Aorta (tissue), 5 donors: ENCODE measurements at regions of chr3 and their contacts with region 1.

Region 1: DNA sequence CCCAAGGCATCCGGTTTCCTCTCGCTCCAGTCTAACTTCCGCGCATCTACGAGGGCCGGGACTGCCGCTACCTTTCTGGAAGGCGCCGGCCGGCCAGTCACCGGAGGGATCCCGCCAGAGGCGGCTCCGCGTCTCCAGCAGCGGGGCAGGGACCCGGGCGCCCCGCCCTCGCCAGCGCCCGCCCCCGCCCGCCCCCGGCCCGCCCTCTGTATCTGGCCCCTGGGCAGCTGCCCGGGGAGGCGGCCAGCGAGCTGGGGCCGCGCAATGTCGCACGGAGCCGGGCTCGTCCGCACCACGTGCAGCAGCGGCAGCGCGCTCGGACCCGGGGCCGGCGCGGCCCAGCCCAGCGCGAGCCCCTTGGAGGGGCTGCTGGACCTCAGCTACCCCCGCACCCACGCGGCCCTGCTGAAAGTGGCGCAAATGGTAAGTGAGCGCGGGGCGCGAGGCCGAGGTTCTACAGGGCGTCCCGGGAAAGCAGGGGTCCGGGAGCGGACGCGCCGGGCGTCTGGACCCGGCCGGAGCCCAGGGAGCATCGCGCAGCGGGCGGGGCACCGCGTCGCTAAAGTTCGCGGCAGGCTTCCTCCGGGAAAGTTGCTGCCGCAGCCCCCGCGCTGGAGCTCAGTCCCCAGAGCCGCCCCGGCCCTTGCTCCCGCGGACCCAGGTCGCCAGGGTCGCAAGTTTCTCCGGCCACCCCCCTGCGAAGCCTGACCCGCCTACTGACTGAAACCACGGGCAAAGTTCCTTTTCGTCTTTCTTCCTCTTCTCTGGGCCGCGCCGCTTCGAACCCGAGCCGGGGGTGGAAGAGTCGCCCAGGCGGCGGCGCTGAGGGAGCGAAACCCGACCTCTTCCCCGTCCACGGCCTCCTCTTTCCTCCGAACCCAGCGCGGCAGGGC is at the start of gene CMTM7:
- DNase-seq: peak; percentile 85 to 90
- ATAC-seq: peak; percentile 85
- H3K4me3 ChIP-seq: peak within 1 kb of the TSS; percentile 30 to 49
- H3K27ac ChIP-seq: no peak within 1 kb of the TSS
- H3K4me1 ChIP-seq: no peaks in the 10 kb centered on the region
- H3K27me3 ChIP-seq: no peaks in the 10 kb centered on the region
- total RNA-seq, gene CMTM7: 11.8 to 17.3 TPM

Region 2: DNA sequence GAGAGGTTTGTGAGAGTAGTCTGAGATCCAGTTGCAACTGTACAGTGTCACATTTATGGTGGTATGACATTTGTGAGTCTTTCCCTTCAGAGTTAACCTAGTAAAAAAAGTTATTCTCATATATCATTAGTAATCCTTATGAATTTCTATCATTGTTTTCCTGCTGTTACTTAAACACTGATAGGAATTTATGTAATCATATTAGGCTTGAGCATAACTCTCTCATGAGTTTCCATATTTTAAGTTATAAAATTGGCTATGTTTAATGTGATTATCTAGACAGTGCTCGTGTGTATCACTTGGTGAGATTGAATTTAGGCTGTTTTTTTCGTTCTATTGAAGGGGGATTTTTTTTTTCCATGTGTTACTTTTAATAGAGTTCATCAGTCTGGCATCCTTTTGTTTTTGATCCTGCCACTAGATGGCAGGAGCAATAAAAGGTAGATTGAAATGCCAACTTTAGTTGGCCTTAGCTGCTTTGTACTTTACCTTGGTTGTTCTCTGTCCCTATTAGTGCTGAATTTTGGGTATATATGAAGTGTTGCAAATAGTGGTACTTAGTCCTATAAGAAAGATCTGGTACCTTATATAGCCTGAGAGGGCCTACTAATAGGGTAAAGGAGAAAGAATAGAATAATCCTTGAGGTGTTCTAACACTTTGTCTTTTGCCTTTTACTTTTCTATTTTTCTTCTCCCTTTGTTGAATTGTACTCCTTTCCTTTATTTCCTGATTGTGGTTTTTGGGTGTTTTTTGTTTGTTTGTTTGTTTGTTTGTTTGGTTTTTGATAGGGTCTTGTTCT is 841.2 kb before region 1 on chr3:
- intact Hi-C with region 1: no loop called
- DNase-seq: no peak
- ATAC-seq: no peak
- H3K4me3 ChIP-seq: no peak overlapping the region
- H3K27ac ChIP-seq: no peak overlapping the region
- H3K4me1 ChIP-seq: peaks cover 1 to 6% of the 10 kb centered on the region in 2 donors
- H3K27me3 ChIP-seq: no peaks in the 10 kb centered on the region

Region 3: GRCh38 chr3:31960793-31961431 is 431.0 kb before region 1 on chr3:
- intact Hi-C with region 1: no loop called
- DNase-seq: no peak
- ATAC-seq: no peak
- H3K4me3 ChIP-seq: no peak overlapping the region
- H3K27ac ChIP-seq: peak overlapping the region; percentile 77 to 86
- H3K4me1 ChIP-seq: peaks cover 6 to 9% of the 10 kb centered on the region in 2 donors
- H3K27me3 ChIP-seq: no peaks in the 10 kb centered on the region

Region 4: GRCh38 chr3:32200490-32200889 is 191.4 kb before region 1 on chr3:
- intact Hi-C with region 1: no loop called
- DNase-seq: peak in 1 of 2 donors; percentile 49
- ATAC-seq: peak; percentile 71
- H3K4me3 ChIP-seq: no peak overlapping the region
- H3K27ac ChIP-seq: no peak overlapping the region
- H3K4me1 ChIP-seq: no peaks in the 10 kb centered on the region
- H3K27me3 ChIP-seq: no peaks in the 10 kb centered on the region

Region 5: GRCh38 chr3:32296256-32297204 is 95.4 kb before region 1 on chr3:
- intact Hi-C with region 1: loop called (anchors 10 kb)
- DNase-seq: peak; percentile 55 to 81
- ATAC-seq: peak; percentile 87
- H3K4me3 ChIP-seq: no peak overlapping the region
- H3K27ac ChIP-seq: no peak overlapping the region
- H3K4me1 ChIP-seq: no peaks in the 10 kb centered on the region
- H3K27me3 ChIP-seq: no peaks in the 10 kb centered on the region

Region 6: GRCh38 chr3:32675164-32675563 is 283.3 kb after region 1 on chr3:
- intact Hi-C with region 1: no loop called
- DNase-seq: no peak
- ATAC-seq: no peak
- H3K4me3 ChIP-seq: no peak overlapping the region
- H3K27ac ChIP-seq: no peak overlapping the region
- H3K4me1 ChIP-seq: no peaks in the 10 kb centered on the region
- H3K27me3 ChIP-seq: no peaks in the 10 kb centered on the region